MCF 10A (cell line): ENCODE measurements at regions of chr1 and their contacts with region 1.

Region 1: GRCh38 chr1:204431310-204432165 is 19.9 kb upstream of the PPP1R15B start:
- DNase-seq: peak; percentile 88
- H3K4me3 Mint-ChIP-seq: no peak overlapping the region
- H3K27ac Mint-ChIP-seq: no peak overlapping the region
- H3K4me1 Mint-ChIP-seq: peaks cover 39% of the 10 kb centered on the region
- H3K27me3 Mint-ChIP-seq: no peaks in the 10 kb centered on the region
- CTCF ChIP-seq: peak; percentile 99

Region 2: GRCh38 chr1:204417231-204417997 is 14.1 kb before region 1 on chr1:
- CTCF ChIA-PET with region 1: interaction called, 132 read pairs
- POLR2A ChIA-PET with region 1: interaction called, 111 read pairs
- intact Hi-C with region 1: loop called (anchors 1 kb)
- DNase-seq: peak; percentile 100
- H3K4me3 Mint-ChIP-seq: peak overlapping the region; percentile 65
- H3K27ac Mint-ChIP-seq: peak overlapping the region; percentile 91
- H3K4me1 Mint-ChIP-seq: peaks cover 48% of the 10 kb centered on the region
- H3K27me3 Mint-ChIP-seq: no peaks in the 10 kb centered on the region
- CTCF ChIP-seq: no peak

Region 3: DNA sequence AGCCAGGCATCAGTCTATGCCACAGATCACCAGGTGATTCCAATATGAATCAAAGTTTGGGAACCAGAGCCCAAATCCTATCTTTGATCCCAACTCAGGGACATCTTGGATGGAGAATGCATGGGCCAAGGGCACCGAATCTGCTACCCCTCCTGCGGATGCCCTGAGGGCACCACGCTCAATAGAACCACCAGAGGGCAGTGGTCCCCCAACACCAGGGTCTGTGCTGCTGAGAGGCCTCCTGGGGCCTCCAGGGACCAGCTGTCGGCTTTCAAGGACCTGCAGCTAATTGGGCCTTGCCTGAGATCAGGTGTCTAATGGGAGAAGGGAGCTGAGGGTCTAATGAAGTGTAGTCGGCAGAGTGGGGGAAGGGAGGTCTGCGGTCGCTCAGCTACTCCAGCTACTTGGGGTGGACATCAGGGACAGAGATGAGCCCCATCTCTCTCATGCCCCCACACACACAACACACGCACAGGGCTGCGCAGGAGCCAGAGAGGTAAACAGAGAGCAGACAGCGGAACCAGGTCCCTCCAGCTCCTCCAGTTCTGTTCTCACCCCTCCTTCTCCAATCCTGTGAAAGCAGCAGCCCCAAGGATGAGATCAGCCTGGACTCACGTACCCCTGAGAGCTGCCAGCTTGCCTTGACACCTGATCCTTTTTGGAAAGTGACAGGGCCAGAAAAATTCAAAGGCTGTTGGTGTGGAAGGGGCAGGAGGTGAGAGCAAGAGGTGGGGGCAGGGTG is 15.0 kb after region 1 on chr1:
- CTCF ChIA-PET with region 1: interaction called, 214 read pairs
- POLR2A ChIA-PET with region 1: interaction called, 11 read pairs
- intact Hi-C with region 1: no loop called
- DNase-seq: peak; percentile 65
- H3K4me3 Mint-ChIP-seq: no peak overlapping the region
- H3K27ac Mint-ChIP-seq: no peak overlapping the region
- H3K4me1 Mint-ChIP-seq: peaks cover 46% of the 10 kb centered on the region
- H3K27me3 Mint-ChIP-seq: no peaks in the 10 kb centered on the region
- CTCF ChIP-seq: peak; percentile 49

Region 4: GRCh38 chr1:204453141-204453772 is 21.7 kb after region 1 on chr1:
- CTCF ChIA-PET with region 1: interaction called, 214 read pairs
- POLR2A ChIA-PET with region 1: interaction called, 7 read pairs
- intact Hi-C with region 1: no loop called
- DNase-seq: no peak
- H3K4me3 Mint-ChIP-seq: no peak overlapping the region
- H3K27ac Mint-ChIP-seq: no peak overlapping the region
- H3K4me1 Mint-ChIP-seq: peaks cover 21% of the 10 kb centered on the region
- H3K27me3 Mint-ChIP-seq: no peaks in the 10 kb centered on the region
- CTCF ChIP-seq: no peak

Region 5: GRCh38 chr1:204480515-204480914 is 49.0 kb after region 1 on chr1:
- CTCF ChIA-PET with region 1: interaction called, 34 read pairs
- POLR2A ChIA-PET with region 1: no interaction called
- intact Hi-C with region 1: no loop called
- DNase-seq: no peak
- H3K4me3 Mint-ChIP-seq: no peak overlapping the region
- H3K27ac Mint-ChIP-seq: no peak overlapping the region
- H3K4me1 Mint-ChIP-seq: peaks cover 17% of the 10 kb centered on the region
- H3K27me3 Mint-ChIP-seq: peaks cover 1% of the 10 kb centered on the region
- CTCF ChIP-seq: no peak

Region 6: GRCh38 chr1:204487256-204487615 is 55.7 kb after region 1 on chr1:
- CTCF ChIA-PET with region 1: interaction called, 1,125 read pairs
- POLR2A ChIA-PET with region 1: interaction called, 253 read pairs
- intact Hi-C with region 1: no loop called
- DNase-seq: no peak
- H3K4me3 Mint-ChIP-seq: no peak overlapping the region
- H3K27ac Mint-ChIP-seq: no peak overlapping the region
- H3K4me1 Mint-ChIP-seq: peaks cover 10% of the 10 kb centered on the region
- H3K27me3 Mint-ChIP-seq: peaks cover 28% of the 10 kb centered on the region
- CTCF ChIP-seq: no peak

Region 7: GRCh38 chr1:204516180-204516879 is 84.8 kb after region 1 on chr1 and contains the start of gene MDM4:
- CTCF ChIA-PET with region 1: interaction called, 17 read pairs
- POLR2A ChIA-PET with region 1: interaction called, 8 read pairs
- intact Hi-C with region 1: no loop called
- DNase-seq: peak; percentile 100
- H3K4me3 Mint-ChIP-seq: no peak within 1 kb of the TSS
- H3K27ac Mint-ChIP-seq: no peak within 1 kb of the TSS
- H3K4me1 Mint-ChIP-seq: peaks cover 12% of the 10 kb centered on the region
- H3K27me3 Mint-ChIP-seq: no peaks in the 10 kb centered on the region
- CTCF ChIP-seq: no peak
- total RNA-seq, gene MDM4: 162 and 174 TPM in 2 replicates